ENCODE measurements at regions of chr3 and their contacts with region 1.

Region 1: DNA sequence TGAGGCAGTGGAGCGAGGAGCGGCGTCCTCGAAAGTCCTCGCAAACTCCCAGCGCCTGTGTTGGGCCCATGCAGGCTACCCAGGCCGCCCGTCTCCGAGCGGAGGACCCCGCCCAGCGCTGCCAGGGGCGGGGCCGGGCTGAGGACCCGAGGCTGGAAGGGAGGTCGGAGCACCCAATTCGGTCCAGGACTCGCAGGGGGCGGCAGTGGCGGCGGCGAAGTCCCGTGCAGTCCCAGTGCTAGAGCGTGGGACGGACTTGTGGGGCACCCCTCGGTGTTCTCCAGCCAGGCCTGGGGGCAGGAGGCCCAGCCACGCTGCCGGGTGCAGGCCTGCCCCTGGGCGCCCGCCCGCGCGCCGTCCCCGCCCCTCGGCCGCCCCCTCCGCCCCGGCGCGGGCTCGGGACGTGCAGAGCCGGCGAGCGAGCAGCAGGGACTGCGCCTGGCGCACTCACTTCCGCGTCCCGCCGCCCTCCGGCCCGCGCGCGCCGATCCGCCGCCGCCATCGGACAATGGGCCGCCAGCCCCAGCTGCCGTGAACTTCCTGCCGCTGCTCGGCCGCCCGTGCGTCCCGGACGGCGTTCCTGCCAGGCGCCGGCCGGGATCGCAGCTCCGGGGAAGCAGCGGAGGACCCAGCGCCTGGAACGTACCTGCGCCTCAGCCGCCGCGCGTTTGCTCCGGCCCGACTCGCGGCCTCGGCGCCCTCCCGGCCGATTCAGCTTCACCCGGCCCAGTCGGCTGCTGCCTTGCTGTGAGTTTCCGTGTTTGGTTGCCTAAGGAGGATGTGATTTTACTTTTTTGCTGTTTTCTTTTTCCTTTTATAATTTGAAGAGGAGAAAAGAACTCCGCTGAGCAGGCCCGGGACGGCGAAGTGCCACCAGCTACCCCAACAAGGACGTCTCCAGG is 592 bp upstream of the LIMD1 start:
- DNase-seq: peak; percentile 83
- H3K4me3 Mint-ChIP-seq: peak overlapping the region; percentile 75
- H3K27ac Mint-ChIP-seq: peak overlapping the region; percentile 58
- H3K4me1 Mint-ChIP-seq: peaks cover 32% of the 10 kb centered on the region
- H3K27me3 Mint-ChIP-seq: peaks cover 14% of the 10 kb centered on the region
- CTCF ChIP-seq: no peak

Region 2: DNA sequence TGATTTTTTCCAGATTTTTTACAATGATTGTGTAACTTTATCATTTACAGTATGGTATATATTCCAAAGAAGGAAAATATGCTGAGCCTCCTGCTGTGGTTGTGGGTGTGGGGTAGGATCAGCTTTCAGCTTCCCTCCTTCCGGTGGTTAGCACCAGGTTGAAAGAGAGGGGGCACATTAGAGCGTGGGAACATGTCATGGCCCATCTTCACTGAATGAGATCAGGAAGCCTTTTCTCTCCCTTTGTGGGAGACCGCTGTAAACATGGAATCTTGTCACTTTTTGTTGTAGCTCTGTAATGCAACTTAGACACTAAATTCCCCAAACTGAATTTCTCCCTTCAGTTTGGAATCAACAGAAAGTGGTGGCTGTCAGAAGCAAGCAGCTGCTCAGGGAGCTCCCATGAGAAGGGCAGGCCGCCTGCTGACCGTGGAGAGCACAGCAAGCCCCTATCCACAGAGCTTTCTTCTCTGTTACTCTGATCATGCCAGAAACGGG is 86.1 kb before region 1 on chr3:
- CTCF ChIA-PET with region 1: no interaction called
- intact Hi-C with region 1: loop called (anchors 1 kb)
- DNase-seq: no peak
- H3K4me3 Mint-ChIP-seq: no peak overlapping the region
- H3K27ac Mint-ChIP-seq: no peak overlapping the region
- H3K4me1 Mint-ChIP-seq: peaks cover 8% of the 10 kb centered on the region
- H3K27me3 Mint-ChIP-seq: no peaks in the 10 kb centered on the region
- CTCF ChIP-seq: no peak

Region 3: GRCh38 chr3:45612918-45613602 is 19.1 kb after region 1 on chr3:
- CTCF ChIA-PET with region 1: interaction called, 9 read pairs
- intact Hi-C with region 1: loop called (anchors 2 kb)
- DNase-seq: peak; percentile 59
- H3K4me3 Mint-ChIP-seq: peak overlapping the region; percentile 46
- H3K27ac Mint-ChIP-seq: peak overlapping the region; percentile 98
- H3K4me1 Mint-ChIP-seq: peaks cover 70% of the 10 kb centered on the region
- H3K27me3 Mint-ChIP-seq: no peaks in the 10 kb centered on the region
- CTCF ChIP-seq: no peak

Region 4: GRCh38 chr3:45647148-45647619 is 53.2 kb after region 1 on chr3:
- CTCF ChIA-PET with region 1: no interaction called
- intact Hi-C with region 1: loop called (anchors 5 kb)
- DNase-seq: peak; percentile 20
- H3K4me3 Mint-ChIP-seq: no peak overlapping the region
- H3K27ac Mint-ChIP-seq: peak overlapping the region; percentile 46
- H3K4me1 Mint-ChIP-seq: peaks cover 48% of the 10 kb centered on the region
- H3K27me3 Mint-ChIP-seq: no peaks in the 10 kb centered on the region
- CTCF ChIP-seq: no peak

Measured in Calu3 (cell line).